MCF 10A (cell line): ENCODE measurements at regions of chr3 and their contacts with region 1.

Region 1: GRCh38 chr3:119019767-119020518 is 14.7 kb downstream of the IGSF11 start:
- DNase-seq: no peak
- H3K4me3 Mint-ChIP-seq: no peak overlapping the region
- H3K27ac Mint-ChIP-seq: no peak overlapping the region
- H3K4me1 Mint-ChIP-seq: peaks cover 6% of the 10 kb centered on the region
- H3K27me3 Mint-ChIP-seq: peaks cover 53% of the 10 kb centered on the region
- CTCF ChIP-seq: no peak

Region 2: DNA sequence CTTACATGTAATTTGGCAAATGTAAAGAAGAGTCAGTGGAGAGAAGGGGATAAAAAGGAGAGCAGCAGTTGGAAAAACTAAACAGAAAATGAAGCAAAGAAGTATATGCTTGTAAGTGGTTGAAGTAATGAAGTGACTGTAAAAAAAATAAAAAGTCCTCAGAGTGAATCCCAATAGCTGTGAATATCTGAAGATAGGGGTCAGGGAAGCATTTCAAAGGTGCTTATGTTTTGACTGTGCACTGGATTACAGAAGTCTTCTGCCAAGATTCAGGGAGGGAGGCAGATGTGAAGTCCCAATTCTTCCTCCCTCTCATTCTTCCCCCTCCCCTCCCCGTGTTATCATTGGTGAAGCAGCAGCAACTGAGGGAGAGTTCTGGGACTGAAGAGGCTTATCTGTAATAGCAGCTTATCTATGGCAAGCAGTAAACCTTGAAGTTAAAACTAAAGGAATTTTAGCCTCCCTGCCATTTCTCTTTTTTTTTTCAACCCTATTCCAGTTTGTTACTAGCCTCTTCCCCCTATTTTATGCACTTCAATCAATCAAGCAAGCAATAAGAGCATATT is 583.2 kb before region 1 on chr3:
- CTCF ChIA-PET with region 1: no interaction called
- POLR2A ChIA-PET with region 1: no interaction called
- intact Hi-C with region 1: loop called (anchors 10 kb)
- DNase-seq: no peak
- H3K4me3 Mint-ChIP-seq: no peak overlapping the region
- H3K27ac Mint-ChIP-seq: no peak overlapping the region
- H3K4me1 Mint-ChIP-seq: no peaks in the 10 kb centered on the region
- H3K27me3 Mint-ChIP-seq: no peaks in the 10 kb centered on the region
- CTCF ChIP-seq: no peak